ENCODE measurements at regions of chr20 and their contacts with region 1.

Region 1: GRCh38 chr20:8305449-8305978 is 173.4 kb downstream of the PLCB1 start:
- DNase-seq: peak; percentile 75
- H3K4me3 Mint-ChIP-seq: no peak overlapping the region
- H3K27ac Mint-ChIP-seq: no peak overlapping the region
- H3K4me1 Mint-ChIP-seq: peaks cover 6% of the 10 kb centered on the region
- H3K27me3 Mint-ChIP-seq: no peaks in the 10 kb centered on the region

Region 2: DNA sequence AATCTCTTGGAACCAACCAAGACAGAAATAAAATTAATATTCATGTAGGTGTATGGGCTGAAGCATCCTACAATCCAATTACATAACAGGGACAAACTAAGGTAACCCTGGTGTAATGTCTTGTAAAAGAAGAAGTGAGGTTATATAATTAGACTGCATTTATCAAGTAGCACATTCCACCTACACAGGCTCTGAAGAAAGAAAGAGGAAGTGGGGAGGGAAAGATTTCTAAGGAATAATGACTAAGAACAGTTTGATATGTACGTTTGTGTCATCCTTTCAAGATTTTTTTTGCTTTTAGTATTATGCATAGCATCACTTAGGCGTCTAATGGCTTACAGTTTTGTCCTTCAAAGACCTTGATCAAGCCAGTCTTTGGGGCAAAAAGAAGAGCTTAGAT is 33.8 kb before region 1 on chr20:
- CTCF ChIA-PET with region 1: no interaction called
- POLR2A ChIA-PET with region 1: no interaction called
- intact Hi-C with region 1: loop called (anchors 1 kb)
- DNase-seq: no peak
- H3K4me3 Mint-ChIP-seq: no peak overlapping the region
- H3K27ac Mint-ChIP-seq: no peak overlapping the region
- H3K4me1 Mint-ChIP-seq: peaks cover 25% of the 10 kb centered on the region
- H3K27me3 Mint-ChIP-seq: peaks cover 5% of the 10 kb centered on the region

Region 3: GRCh38 chr20:8284902-8285301 is 20.6 kb before region 1 on chr20:
- CTCF ChIA-PET with region 1: no interaction called
- POLR2A ChIA-PET with region 1: no interaction called
- intact Hi-C with region 1: no loop called
- DNase-seq: no peak
- H3K4me3 Mint-ChIP-seq: no peak overlapping the region
- H3K27ac Mint-ChIP-seq: no peak overlapping the region
- H3K4me1 Mint-ChIP-seq: no peaks in the 10 kb centered on the region
- H3K27me3 Mint-ChIP-seq: no peaks in the 10 kb centered on the region

Region 4: GRCh38 chr20:8389381-8390036 is 84.0 kb after region 1 on chr20:
- CTCF ChIA-PET with region 1: no interaction called
- POLR2A ChIA-PET with region 1: no interaction called
- intact Hi-C with region 1: loop called (anchors 5 kb)
- DNase-seq: no peak
- H3K4me3 Mint-ChIP-seq: no peak overlapping the region
- H3K27ac Mint-ChIP-seq: no peak overlapping the region
- H3K4me1 Mint-ChIP-seq: no peaks in the 10 kb centered on the region
- H3K27me3 Mint-ChIP-seq: no peaks in the 10 kb centered on the region

Region 5: GRCh38 chr20:8454137-8454712 is 148.7 kb after region 1 on chr20:
- CTCF ChIA-PET with region 1: no interaction called
- POLR2A ChIA-PET with region 1: no interaction called
- intact Hi-C with region 1: loop called (anchors 1 kb)
- DNase-seq: peak; percentile 23
- H3K4me3 Mint-ChIP-seq: no peak overlapping the region
- H3K27ac Mint-ChIP-seq: no peak overlapping the region
- H3K4me1 Mint-ChIP-seq: peaks cover 7% of the 10 kb centered on the region
- H3K27me3 Mint-ChIP-seq: no peaks in the 10 kb centered on the region